Activated naive CD4-positive, alpha-beta T cell treated with anti-CD3 and anti-CD28 coated beads for 36 hours (primary cell): ENCODE measurements at regions of chr19 and their contacts with region 1.

Region 1: DNA sequence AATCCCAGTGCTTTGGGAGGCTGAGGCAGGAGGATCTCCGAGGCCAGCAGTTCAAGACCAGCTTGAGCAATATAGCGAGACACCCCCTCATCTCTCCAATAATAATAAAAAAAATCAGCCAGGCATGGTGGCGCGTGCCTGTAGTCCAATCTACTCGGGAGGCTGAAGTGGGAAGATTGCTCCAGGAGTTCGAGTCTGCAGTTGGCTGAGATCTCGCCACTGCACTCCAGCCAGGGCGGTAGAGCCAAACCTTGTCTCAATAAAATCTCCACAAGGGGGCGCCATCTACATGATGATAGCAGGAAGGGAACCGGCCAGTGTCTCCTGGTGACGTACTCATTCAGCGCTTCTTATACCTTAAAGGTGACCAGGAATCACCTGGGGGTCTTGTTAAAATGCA is 13.6 kb upstream of the C5AR1 start:
- DNase-seq: peak; percentile 91
- H3K4me3 Mint-ChIP-seq: no peak overlapping the region
- H3K27ac Mint-ChIP-seq: no peak overlapping the region
- H3K4me1 Mint-ChIP-seq: no peaks in the 10 kb centered on the region
- H3K27me3 Mint-ChIP-seq: no peaks in the 10 kb centered on the region

Region 2: GRCh38 chr19:47391510-47392223 is 95.6 kb after region 1 on chr19:
- CTCF ChIA-PET with region 1: interaction called, 25 read pairs
- intact Hi-C with region 1: loop called (anchors 1 kb)
- DNase-seq: peak; percentile 91
- H3K4me3 Mint-ChIP-seq: no peak overlapping the region
- H3K27ac Mint-ChIP-seq: no peak overlapping the region
- H3K4me1 Mint-ChIP-seq: peaks cover 2% of the 10 kb centered on the region
- H3K27me3 Mint-ChIP-seq: peaks cover 2% of the 10 kb centered on the region

Region 3: GRCh38 chr19:47428177-47428894 is 132.3 kb after region 1 on chr19:
- CTCF ChIA-PET with region 1: interaction called, 13 read pairs
- intact Hi-C with region 1: loop called (anchors 1 kb)
- DNase-seq: peak; percentile 94
- H3K4me3 Mint-ChIP-seq: no peak overlapping the region
- H3K27ac Mint-ChIP-seq: no peak overlapping the region
- H3K4me1 Mint-ChIP-seq: peaks cover 15% of the 10 kb centered on the region
- H3K27me3 Mint-ChIP-seq: peaks cover 49% of the 10 kb centered on the region

Region 4: GRCh38 chr19:47707135-47707925 is 411.3 kb after region 1 on chr19:
- CTCF ChIA-PET with region 1: no interaction called
- intact Hi-C with region 1: loop called (anchors 1 kb)
- DNase-seq: peak; percentile 89
- H3K4me3 Mint-ChIP-seq: no peak overlapping the region
- H3K27ac Mint-ChIP-seq: no peak overlapping the region
- H3K4me1 Mint-ChIP-seq: peaks cover 4% of the 10 kb centered on the region
- H3K27me3 Mint-ChIP-seq: peaks cover 6% of the 10 kb centered on the region